Dorsolateral prefrontal cortex (tissue), 120 donors: ENCODE measurements at regions of chr5 and their contacts with region 1.

Region 1: DNA sequence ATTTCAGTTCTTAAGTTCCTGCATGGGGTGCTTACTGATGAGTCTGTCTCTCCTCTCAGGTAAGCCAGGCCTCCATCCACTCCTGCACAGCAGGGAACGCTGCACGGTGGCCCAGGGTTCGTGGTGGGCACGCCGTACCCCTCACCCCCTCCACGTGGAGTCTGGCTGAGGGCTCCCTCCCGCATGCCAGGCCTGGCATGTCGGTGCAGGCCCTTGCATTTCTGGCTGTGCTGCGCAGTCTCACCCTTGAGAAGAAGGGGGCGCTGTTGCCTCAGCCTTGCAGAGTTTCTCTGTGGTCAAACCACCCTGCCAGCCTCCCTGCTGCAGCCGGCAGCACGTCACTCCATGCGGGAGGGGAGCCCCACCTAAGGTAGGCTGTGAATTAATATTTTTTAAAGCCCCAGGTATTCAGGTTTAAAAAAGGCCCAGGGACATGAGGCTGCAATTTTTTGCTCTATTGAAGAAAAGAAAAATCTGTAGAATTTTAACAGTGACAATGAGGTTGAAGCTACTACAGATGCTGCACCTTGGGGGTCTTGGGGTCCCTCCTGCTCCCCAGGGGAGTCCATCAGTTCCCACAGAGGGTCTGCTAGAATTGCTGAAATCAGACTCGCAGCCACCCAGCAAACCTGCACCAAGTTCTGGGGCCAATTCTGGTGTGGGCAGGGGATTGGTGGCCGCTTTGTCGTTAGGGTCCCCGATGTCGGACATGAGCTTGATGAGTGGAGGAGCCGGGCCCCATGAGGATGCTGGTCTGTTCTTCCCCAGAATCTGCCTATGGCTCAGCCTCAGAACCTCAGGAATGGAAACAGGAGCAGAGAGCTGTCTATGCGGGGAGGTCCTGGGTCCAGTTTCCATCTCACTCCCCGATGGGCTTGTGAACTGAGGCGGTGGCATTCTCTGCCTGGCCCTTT is 52.6 kb downstream of the TENT4A start:
- DNase-seq: peak; percentile 64 to 86 (median 80)
- H3K4me3 ChIP-seq: peak overlapping the region in 30 of 59 donors; percentile 3 to 49 (median 27)
- H3K27ac ChIP-seq: peak overlapping the region in 4 of 59 donors; percentile 0 to 46 (median 12)
- H3K27me3 ChIP-seq: no peaks in the 10 kb centered on the region
- CTCF ChIP-seq: peak; percentile 59 to 89 (median 80)

Region 2: DNA sequence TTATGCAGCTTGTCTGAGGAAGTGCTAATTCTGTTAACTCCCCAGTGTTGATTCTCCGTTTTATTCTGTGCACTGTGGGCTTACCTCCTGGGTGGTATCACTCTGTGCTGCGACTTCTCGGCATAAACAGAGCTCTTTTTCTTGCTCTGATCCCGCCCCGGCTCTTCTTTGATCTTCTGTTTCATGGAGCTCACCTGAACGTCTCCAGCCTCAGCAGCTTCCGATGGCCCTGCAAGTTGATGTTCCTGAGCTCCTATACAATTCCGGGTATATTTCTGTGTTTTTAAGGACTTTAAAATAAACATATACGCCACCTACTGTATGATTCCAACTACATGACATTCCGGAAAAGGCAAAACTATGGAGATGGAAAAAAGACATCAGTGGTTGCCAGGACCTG is 58.1 kb after region 1 on chr5:
- intact Hi-C with region 1: no loop called
- DNase-seq: no peak
- H3K4me3 ChIP-seq: peak overlapping the region in 11 of 59 donors; percentile 1 to 43 (median 24)
- H3K27ac ChIP-seq: peak overlapping the region in 18 of 59 donors; percentile 4 to 76 (median 48)
- H3K27me3 ChIP-seq: peaks cover 0 to 8% (median 0%) of the 10 kb centered on the region in 45 donors
- CTCF ChIP-seq: peak in 1 of 56 donors; percentile 11

Region 3: GRCh38 chr5:6837519-6838110 is 71.7 kb after region 1 on chr5:
- intact Hi-C with region 1: loop called in 1 of 2 experiments (anchors 5 kb)
- DNase-seq: no peak
- H3K4me3 ChIP-seq: no peak overlapping the region
- H3K27ac ChIP-seq: no peak overlapping the region
- H3K27me3 ChIP-seq: peaks cover 0 to 3% (median 0%) of the 10 kb centered on the region in 45 donors
- CTCF ChIP-seq: peak in 35 of 56 donors; percentile 7 to 43 (median 23)

Region 4: GRCh38 chr5:7391814-7392692 is 626.2 kb after region 1 on chr5:
- intact Hi-C with region 1: loop called in 1 of 2 experiments (anchors 5 kb)
- DNase-seq: peak in 1 of 10 donors; percentile 40
- H3K4me3 ChIP-seq: no peak overlapping the region
- H3K27ac ChIP-seq: peak overlapping the region in 31 of 59 donors; percentile 3 to 90 (median 60)
- H3K27me3 ChIP-seq: peaks cover 0 to 13% (median 0%) of the 10 kb centered on the region in 45 donors
- CTCF ChIP-seq: peak; percentile 33 to 77 (median 64)

Region 5: DNA sequence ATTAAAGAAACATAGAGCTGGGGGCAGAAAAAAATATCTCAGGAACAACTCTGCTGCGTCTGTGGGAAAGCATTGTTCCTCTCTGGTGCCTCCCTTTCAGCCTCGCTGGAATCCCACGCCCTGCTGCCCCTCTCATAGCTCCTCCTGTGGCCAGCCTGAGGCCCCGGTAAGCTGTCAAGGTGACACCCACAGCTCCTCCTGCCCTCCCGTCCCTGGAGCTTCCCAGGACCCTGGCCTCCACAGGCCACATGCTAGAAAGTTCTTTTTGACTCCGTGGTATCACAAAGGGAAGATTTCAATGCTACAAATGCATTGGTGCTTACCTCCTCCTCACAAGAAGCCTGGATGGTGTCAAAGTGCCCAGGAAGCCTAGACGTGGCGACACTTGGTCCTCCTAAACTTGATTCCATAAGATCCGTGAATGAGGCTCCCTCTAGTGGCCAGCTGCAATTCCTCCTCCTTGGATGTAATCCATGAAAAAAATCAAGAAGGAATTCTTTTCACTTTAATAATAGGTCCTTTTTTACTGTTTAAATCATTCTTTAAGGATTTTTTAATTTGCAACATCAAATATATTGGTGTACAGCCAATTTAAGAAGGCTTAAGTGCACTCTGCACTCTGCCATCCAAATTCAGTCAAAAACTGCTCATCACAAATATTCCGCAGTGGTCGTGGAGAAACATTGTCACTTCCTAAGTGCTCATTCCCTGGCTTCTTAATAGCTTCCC is 980.2 kb after region 1 on chr5:
- intact Hi-C with region 1: loop called (anchors 5 to 10 kb)
- DNase-seq: peak in 9 of 10 donors; percentile 51 to 89 (median 69)
- H3K4me3 ChIP-seq: no peak overlapping the region
- H3K27ac ChIP-seq: peak overlapping the region in 26 of 59 donors; percentile 6 to 78 (median 39)
- H3K27me3 ChIP-seq: no peaks in the 10 kb centered on the region
- CTCF ChIP-seq: peak; percentile 77 to 97 (median 86)

Region 6: DNA sequence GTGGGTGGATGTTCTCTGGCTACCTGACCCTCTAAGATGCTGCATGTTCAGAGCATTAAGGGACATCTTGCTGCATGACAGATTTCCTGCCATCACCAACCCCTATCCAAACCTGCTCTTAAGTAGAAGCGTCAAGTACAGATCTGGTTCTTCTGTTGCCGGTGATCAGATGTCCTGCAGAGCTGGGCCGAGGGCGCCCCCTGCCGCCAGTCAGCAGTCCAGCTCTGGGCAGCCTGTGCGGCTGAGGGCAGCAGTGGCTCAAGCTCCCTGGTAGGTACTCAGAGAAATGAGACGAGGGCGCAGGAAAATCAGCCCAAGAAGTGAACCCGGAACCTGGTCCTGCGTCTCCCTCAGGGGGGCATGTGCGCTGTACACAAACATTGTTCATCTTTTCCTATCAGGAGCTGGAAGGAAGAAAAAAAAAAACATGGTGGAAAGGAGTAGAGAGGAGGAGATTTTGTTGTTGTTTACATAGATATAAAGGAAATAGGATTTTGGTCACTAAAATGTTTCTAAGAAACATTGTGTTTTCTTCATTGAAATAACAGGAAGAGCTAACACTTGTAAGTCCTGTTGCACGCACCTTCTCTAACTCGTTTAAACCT is 989.2 kb after region 1 on chr5:
- intact Hi-C with region 1: loop called in 1 of 2 experiments (anchors 10 kb)
- DNase-seq: peak in 8 of 10 donors; percentile 14 to 76 (median 60)
- H3K4me3 ChIP-seq: no peak overlapping the region
- H3K27ac ChIP-seq: peak overlapping the region in 9 of 59 donors; percentile 5 to 69 (median 37)
- H3K27me3 ChIP-seq: peaks cover 0 to 2% (median 0%) of the 10 kb centered on the region in 45 donors
- CTCF ChIP-seq: peak; percentile 25 to 76 (median 66)

Region 7: GRCh38 chr5:7856855-7857254 is 1091.0 kb after region 1 on chr5:
- intact Hi-C with region 1: loop called (anchors 10 kb)
- DNase-seq: peak in 8 of 10 donors; percentile 19 to 71 (median 51)
- H3K4me3 ChIP-seq: no peak overlapping the region
- H3K27ac ChIP-seq: peak overlapping the region in 2 of 59 donors; percentile 18 to 21
- H3K27me3 ChIP-seq: no peaks in the 10 kb centered on the region
- CTCF ChIP-seq: peak; percentile 42 to 92 (median 83)

Region 8: DNA sequence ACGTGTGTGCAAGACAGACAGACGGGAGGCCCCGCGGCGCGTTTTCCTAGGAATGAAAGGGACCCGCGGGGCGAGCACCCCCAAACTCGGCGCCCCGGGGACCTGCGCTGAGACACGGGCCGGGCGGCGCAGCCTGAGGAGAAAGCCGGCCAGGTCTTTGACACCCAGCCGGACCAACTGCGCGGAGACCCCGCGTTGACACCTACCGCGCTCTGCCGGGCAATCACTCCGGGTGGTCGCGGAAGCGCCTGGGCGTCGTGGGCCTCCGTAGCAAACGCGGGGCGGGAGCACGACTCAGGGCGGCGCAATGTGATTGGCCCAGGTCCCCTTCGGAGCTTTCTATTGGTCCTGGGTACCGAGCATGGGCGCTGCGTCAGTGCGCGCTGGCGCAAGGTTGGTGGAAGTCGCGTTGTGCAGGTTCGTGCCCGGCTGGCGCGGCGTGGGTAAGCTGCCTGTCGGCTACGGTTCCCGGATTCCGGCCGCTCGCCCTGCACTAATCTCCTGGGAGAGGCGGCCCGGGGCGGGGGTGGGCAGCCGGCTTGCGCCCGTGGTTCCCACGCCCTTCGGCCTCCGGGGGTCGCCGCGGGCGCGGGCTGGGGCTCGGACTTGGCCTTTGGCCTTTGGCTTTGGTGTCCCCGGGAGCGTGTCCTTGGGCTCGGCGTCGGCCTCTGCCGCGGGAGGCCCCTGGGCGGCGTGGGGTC is 1103.1 kb after region 1 on chr5 and contains the starts of genes FASTKD3 and MTRR:
- intact Hi-C with region 1: loop called in 1 of 2 experiments (anchors 10 kb)
- DNase-seq: peak; percentile 92 to 97 (median 96)
- H3K4me3 ChIP-seq: peak within 1 kb of the TSS; percentile 80 to 100 (median 98)
- H3K27ac ChIP-seq: peak within 1 kb of the TSS in 57 of 59 donors; percentile 3 to 93 (median 77)
- H3K27me3 ChIP-seq: no peaks in the 10 kb centered on the region
- CTCF ChIP-seq: peak in 24 of 56 donors; percentile 1 to 52 (median 22)
- total RNA-seq, gene FASTKD3: 4.4 to 16.7 (median 10.2) TPM
- total RNA-seq, gene MTRR: 42.8 to 132 (median 64.0) TPM